ENCODE measurements at regions of chr10 and their contacts with region 1.

Region 1: GRCh38 chr10:78981257-78981969 is 87.4 kb upstream of the ZMIZ1 start:
- DNase-seq: no peak
- H3K4me3 ChIP-seq: no peak overlapping the region
- H3K27ac ChIP-seq: peak overlapping the region in 1 of 3 donors; percentile 38
- H3K4me1 ChIP-seq: peaks cover 41 to 58% of the 10 kb centered on the region in 2 donors
- H3K27me3 ChIP-seq: no peaks in the 10 kb centered on the region
- CTCF ChIP-seq: no peak
- POLR2A ChIP-seq: no peak

Region 2: DNA sequence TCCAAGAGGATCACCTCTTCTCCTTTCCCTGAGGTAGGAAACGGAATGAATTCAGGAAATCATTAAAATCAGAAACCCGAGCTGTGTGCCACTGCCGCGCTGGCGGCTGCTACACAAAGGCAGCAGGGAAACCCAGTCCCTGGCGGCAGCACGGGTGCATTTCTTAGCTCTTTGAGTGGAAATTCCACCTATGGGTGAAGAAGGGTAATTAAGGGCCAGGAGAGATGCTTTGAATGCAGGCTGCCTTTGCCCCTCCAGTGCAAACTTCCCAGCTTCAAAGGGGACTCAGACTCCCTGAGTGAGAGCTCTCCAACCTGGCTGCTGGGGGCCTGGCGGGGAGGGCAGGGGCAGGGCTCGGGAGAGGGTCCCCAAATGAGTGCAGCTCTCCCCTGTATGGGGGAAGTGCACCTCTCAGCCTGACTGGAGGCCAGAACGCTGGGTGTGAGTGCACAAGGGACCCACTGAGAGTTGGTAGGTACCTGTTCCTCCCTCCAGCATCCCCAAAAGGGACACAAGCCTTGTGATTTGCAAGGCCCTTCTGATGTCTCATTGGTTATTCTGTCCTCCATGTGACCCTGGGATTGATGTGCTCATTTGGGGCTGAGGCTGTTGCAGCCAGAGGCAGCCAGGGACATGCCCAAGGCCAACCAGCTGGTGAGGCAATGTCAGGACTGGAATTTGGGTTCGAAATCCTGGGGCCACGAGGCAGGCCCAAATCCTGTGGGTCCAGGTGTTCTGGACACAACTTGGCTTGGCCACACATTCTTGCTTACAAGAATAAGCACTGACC is 71.1 kb after region 1 on chr10:
- intact Hi-C with region 1: loop called (anchors 5 kb)
- DNase-seq: peak; percentile 65 to 68
- H3K4me3 ChIP-seq: no peak overlapping the region
- H3K27ac ChIP-seq: no peak overlapping the region
- H3K4me1 ChIP-seq: peaks cover 4 to 20% of the 10 kb centered on the region in 2 donors
- H3K27me3 ChIP-seq: no peaks in the 10 kb centered on the region
- CTCF ChIP-seq: peak; percentile 11 to 91 (median 68)
- POLR2A ChIP-seq: no peak

Measured in thyroid gland (tissue), 4 donors.